PC-9 (cell line): ENCODE measurements at regions of chr21 and their contacts with region 1.

Region 1: DNA sequence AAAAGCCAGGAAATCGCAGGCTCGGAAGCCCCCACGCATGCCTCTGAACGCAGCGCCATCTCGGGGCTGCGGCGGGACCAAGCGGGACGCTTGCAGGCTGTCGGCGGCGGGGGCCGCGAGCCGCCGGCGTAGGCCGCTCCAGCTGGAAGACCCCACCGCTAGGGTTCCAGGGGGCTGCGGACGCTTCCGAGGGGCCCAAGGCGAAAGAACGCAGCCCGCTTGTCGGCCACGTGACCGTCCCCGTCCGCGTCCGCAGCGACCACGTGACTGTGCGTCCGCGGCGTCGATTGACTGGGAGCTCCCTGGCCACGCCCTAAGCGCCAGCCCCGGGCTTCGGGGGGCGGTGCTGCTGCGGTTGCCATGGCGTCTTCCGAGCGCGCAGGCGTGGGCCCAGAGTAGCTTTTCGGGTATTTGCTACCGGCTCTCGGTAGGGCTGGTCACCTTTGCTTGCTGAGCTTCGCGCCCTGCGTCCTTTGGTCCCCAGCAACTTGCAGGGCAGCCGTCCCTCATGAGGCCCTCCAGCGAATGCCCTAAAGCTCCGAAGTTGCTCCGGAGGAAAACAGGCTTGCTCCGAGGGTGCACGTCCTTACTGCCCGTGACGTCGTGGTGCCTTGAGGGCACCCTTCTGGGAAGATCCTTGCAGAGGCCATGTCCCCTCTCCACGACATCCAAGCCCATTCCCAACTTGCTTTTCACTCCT is 197.2 kb downstream of the DYRK1A start:
- DNase-seq: peak; percentile 82 to 89
- H3K4me3 ChIP-seq: peak overlapping the region; percentile 65
- H3K27ac ChIP-seq: peak overlapping the region; percentile 99
- H3K4me1 ChIP-seq: peaks cover 14% of the 10 kb centered on the region
- H3K27me3 ChIP-seq: no peaks in the 10 kb centered on the region
- CTCF ChIP-seq: peak; percentile 14; the same call in 1 of the 2 replicates

Region 2: DNA sequence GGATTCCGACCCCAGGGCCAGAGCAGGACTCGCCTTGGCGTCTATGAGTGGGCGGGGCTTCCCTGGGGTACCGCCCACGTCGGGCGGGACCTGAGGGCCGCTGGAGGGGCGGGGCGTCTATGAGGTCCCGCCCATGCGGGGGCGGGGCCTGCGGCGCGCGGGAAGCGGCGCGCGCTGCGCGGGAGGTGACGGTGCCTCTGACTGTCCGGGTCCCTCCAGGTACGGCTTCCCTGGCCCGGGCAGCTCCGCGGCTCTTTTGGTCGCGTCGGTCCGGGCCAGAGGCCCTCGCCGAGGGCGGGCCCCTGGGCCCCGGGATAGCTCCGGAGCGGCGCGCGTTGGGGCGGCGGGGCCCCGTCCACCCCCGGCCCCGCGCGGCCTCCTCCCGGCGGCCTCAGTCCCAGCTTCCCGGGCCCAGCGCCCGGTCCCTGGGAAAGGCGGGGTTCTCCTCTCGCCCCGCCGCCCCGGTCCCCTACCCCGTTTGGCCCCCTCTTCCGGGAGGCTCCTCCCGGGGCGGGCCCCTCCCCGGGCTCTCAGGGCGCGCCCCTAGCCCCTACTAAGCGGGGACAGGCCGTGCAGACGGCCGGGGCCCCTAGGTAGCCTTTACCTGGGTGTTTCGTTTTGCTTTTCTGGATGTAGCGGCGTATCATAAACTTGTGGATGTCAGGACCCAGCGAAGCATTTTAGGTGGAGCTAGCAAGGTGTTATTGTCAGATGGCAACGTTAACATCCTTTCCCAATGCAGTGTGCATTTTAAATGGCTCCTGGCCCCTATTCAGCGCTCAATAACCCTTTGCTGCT is 1178.4 kb before region 1 on chr21 and contains the start of gene CHAF1B:
- CTCF ChIA-PET with region 1: no interaction called
- POLR2A ChIA-PET with region 1: interaction called, 15 read pairs
- intact Hi-C with region 1: no loop called
- DNase-seq: peak; percentile 37 to 79
- H3K4me3 ChIP-seq: peak within 1 kb of the TSS; percentile 82
- H3K27ac ChIP-seq: no peak within 1 kb of the TSS
- H3K4me1 ChIP-seq: peaks cover 8% of the 10 kb centered on the region
- H3K27me3 ChIP-seq: no peaks in the 10 kb centered on the region
- CTCF ChIP-seq: no peak
- total RNA-seq, gene CHAF1B: 12.9 and 14.1 TPM in 2 replicates

Region 3: GRCh38 chr21:37338671-37339551 is 224.9 kb before region 1 on chr21:
- CTCF ChIA-PET with region 1: no interaction called
- POLR2A ChIA-PET with region 1: no interaction called
- intact Hi-C with region 1: loop called (anchors 1 kb)
- DNase-seq: peak; percentile 80 to 96
- H3K4me3 ChIP-seq: peak overlapping the region; percentile 48
- H3K27ac ChIP-seq: peak overlapping the region; percentile 83
- H3K4me1 ChIP-seq: peaks cover 25% of the 10 kb centered on the region
- H3K27me3 ChIP-seq: no peaks in the 10 kb centered on the region
- CTCF ChIP-seq: no peak

Region 4: GRCh38 chr21:37636152-37636860 is 72.5 kb after region 1 on chr21:
- CTCF ChIA-PET with region 1: no interaction called
- POLR2A ChIA-PET with region 1: interaction called, 5 read pairs
- intact Hi-C with region 1: loop called (anchors 2 kb)
- DNase-seq: peak; percentile 35 to 77
- H3K4me3 ChIP-seq: no peak overlapping the region
- H3K27ac ChIP-seq: peak overlapping the region; percentile 58
- H3K4me1 ChIP-seq: peaks cover 19% of the 10 kb centered on the region
- H3K27me3 ChIP-seq: no peaks in the 10 kb centered on the region
- CTCF ChIP-seq: no peak

Region 5: DNA sequence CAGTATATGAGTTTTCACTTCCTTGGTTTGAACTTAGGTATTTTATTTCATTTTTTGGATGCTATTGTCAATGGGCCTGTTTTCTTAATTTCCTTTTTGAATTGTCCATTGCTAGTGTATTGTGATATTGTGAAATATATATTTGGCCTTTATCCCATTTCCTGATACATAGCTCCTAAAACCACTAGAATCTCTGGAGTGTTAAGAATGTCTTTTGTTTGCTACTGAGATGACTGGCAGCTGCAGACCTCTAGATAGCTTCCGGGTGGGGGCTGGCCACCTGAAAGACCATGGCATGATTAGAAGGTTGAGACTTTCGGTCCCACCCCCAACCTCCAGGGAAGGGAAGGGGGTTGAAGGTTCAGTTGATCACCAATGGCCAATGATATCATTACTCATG is 107.1 kb after region 1 on chr21:
- CTCF ChIA-PET with region 1: interaction called, 10 read pairs
- POLR2A ChIA-PET with region 1: interaction called, 4 read pairs
- intact Hi-C with region 1: loop called (anchors 5 kb)
- DNase-seq: peak; percentile 63 to 83
- H3K4me3 ChIP-seq: no peak overlapping the region
- H3K27ac ChIP-seq: peak overlapping the region; percentile 72
- H3K4me1 ChIP-seq: peaks cover 28% of the 10 kb centered on the region
- H3K27me3 ChIP-seq: no peaks in the 10 kb centered on the region
- CTCF ChIP-seq: no peak